ENCODE measurements at regions of chr7 and their contacts with region 1.

Region 1: DNA sequence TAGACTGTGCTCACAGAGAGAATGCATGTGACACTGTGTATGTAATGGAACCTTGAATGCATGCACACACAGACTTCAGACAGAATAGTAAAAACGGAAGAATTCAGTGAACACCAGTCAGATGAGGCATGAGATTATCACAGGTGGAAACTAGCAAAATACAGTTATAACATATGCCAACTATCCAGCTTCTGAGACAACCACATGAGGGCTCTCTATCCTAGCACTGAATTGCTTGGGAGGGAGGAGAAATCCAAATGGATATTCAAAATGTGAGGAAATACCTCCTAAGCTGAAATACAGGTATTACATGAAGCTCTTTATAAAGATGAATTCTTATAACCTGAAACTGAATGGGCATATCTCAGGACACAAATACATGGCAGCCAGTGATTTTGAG is 30.6 kb downstream of the GARS1 start:
- DNase-seq: no peak
- ATAC-seq: peak; percentile 10
- H3K4me3 ChIP-seq: no peak overlapping the region
- H3K27ac ChIP-seq: no peak overlapping the region
- H3K4me1 ChIP-seq: no peaks in the 10 kb centered on the region
- H3K27me3 ChIP-seq: no peaks in the 10 kb centered on the region
- CTCF ChIP-seq: no peak
- EP300 ChIP-seq: no peak
- POLR2A ChIP-seq: no peak
- RAD21 ChIP-seq: no peak

Region 2: DNA sequence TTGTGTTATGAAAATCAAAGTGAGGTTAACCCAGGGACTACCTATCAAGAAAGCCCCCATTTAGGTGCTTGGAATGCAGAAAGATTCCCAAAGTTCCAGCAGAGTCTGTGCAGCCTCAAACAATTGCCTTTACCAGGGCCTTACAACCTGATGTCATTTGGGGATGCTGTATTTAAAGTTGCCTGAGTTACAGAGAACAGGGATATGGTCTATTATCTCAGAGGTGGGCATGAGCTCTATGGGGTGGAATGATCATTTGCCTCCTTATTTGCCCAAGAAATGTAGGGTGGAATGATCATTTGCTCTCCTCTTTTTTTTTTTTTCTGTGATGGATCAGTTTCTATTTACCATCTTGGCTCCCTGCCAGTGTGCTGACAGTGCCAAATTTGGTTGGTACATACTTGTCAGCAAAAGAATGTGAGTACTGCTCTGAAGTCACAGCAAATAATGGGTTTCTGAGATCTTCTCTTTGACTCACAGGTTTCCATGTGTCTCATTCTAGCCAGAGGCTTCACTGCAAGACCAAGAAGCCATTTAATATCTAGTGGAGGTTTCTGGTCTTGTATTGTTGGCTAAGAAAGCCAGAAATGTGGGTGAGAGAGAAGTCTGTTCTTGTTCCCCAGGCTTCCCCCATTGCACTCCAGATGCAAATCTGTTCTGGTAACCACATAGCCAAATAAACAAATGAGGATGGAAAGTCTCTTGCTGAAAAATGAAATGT is 386.4 kb before region 1 on chr7:
- CTCF ChIA-PET with region 1: no interaction called
- POLR2A ChIA-PET with region 1: no interaction called
- in situ Hi-C with region 1: no loop called
- intact Hi-C with region 1: no loop called
- DNase-seq: no peak
- ATAC-seq: no peak
- H3K4me3 ChIP-seq: no peak overlapping the region
- H3K27ac ChIP-seq: no peak overlapping the region
- H3K4me1 ChIP-seq: no peaks in the 10 kb centered on the region
- H3K27me3 ChIP-seq: peaks cover 3 to 12% of the 10 kb centered on the region in 2 experiments; a peak in 2 of 5 replicates
- CTCF ChIP-seq: no peak
- EP300 ChIP-seq: no peak
- POLR2A ChIP-seq: no peak
- RAD21 ChIP-seq: no peak

Region 3: GRCh38 chr7:30284298-30285066 is 340.8 kb before region 1 on chr7 and contains the start of gene ZNRF2:
- CTCF ChIA-PET with region 1: no interaction called
- POLR2A ChIA-PET with region 1: no interaction called
- in situ Hi-C with region 1: no loop called
- intact Hi-C with region 1: no loop called
- DNase-seq: peak; percentile 97 to 99 (median 98)
- ATAC-seq: peak; percentile 90
- H3K4me3 ChIP-seq: peak within 1 kb of the TSS; percentile 94
- H3K27ac ChIP-seq: peak within 1 kb of the TSS; percentile 93
- H3K4me1 ChIP-seq: peaks cover 4 to 10% of the 10 kb centered on the region in 2 experiments; a peak in 4 of 5 replicates
- H3K27me3 ChIP-seq: no peaks in the 10 kb centered on the region
- CTCF ChIP-seq: peak; percentile 53 to 92 (median 63); a peak in 5 of 6 replicates
- EP300 ChIP-seq: no peak
- POLR2A ChIP-seq: peak; percentile 56
- RAD21 ChIP-seq: peak; percentile 54 to 56
- polyA plus RNA-seq, gene ZNRF2: 1.1 to 1.2 TPM

Region 4: GRCh38 chr7:30612658-30613265 is 12.5 kb before region 1 on chr7:
- CTCF ChIA-PET with region 1: no interaction called
- POLR2A ChIA-PET with region 1: interaction called, 35 read pairs
- in situ Hi-C with region 1: no loop called
- intact Hi-C with region 1: no loop called
- DNase-seq: no peak
- ATAC-seq: no peak
- H3K4me3 ChIP-seq: no peak overlapping the region
- H3K27ac ChIP-seq: no peak overlapping the region
- H3K4me1 ChIP-seq: no peaks in the 10 kb centered on the region
- H3K27me3 ChIP-seq: no peaks in the 10 kb centered on the region
- CTCF ChIP-seq: no peak
- EP300 ChIP-seq: no peak
- POLR2A ChIP-seq: no peak
- RAD21 ChIP-seq: no peak

Measured in K562 (cell line).